ENCODE measurements at regions of chr2 and their contacts with region 1.

Region 1: GRCh38 chr2:118865106-118865505 is 17.7 kb upstream of the EN1 start:
- DNase-seq: peak; percentile 49
- H3K4me3 ChIP-seq: no peak overlapping the region
- H3K27ac ChIP-seq: no peak overlapping the region
- H3K4me1 ChIP-seq: no peaks in the 10 kb centered on the region
- H3K27me3 ChIP-seq: peaks cover 12% of the 10 kb centered on the region
- CTCF ChIP-seq: peak; percentile 66

Region 2: DNA sequence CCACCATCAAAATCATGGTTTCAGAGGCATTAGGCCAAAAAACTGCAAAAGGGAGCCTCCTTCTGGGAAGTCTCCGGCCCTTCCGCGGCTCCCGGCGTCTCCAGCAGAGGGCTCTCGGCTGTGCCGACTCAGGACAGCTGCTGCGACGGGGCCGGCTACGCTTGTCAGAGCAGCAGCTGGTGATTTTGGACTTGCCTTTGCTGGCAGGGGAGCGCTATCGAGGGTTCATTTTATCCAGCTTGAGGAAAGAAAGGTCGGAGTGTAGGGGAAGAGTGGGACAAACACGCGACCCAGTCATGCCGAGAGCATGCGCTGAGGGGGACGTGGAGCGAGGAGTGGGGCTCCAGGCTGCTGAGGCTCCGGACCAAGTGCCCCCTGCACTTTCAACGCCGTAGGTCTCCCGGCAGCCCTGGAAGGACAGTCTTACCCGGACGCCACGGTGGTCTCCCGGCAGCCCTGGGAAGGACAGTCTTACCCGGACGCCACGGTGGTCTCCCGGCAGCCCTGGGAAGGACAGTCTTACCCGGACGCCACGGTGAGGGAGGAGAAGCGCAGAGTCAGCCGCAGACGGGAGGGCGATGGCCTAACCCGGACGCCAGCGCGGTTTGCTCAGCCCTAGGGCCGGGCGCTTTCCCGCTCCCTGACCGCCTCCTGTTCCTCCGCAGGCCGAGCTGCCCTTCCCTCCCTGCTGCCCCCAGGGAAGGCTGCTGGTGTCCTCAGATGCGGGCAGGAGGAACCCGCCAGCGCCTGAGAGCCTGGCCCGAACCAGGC is 1028.9 kb before region 1 on chr2:
- CTCF ChIA-PET with region 1: no interaction called
- POLR2A ChIA-PET with region 1: no interaction called
- intact Hi-C with region 1: loop called (anchors 5 kb)
- DNase-seq: peak; percentile 86
- H3K4me3 ChIP-seq: peak overlapping the region; percentile 20
- H3K27ac ChIP-seq: no peak overlapping the region
- H3K4me1 ChIP-seq: no peaks in the 10 kb centered on the region
- H3K27me3 ChIP-seq: no peaks in the 10 kb centered on the region
- CTCF ChIP-seq: peak; percentile 90

Region 3: GRCh38 chr2:118032169-118033013 is 832.7 kb before region 1 on chr2:
- CTCF ChIA-PET with region 1: no interaction called
- POLR2A ChIA-PET with region 1: no interaction called
- intact Hi-C with region 1: loop called (anchors 5 kb)
- DNase-seq: peak; percentile 51
- H3K4me3 ChIP-seq: no peak overlapping the region
- H3K27ac ChIP-seq: no peak overlapping the region
- H3K4me1 ChIP-seq: no peaks in the 10 kb centered on the region
- H3K27me3 ChIP-seq: no peaks in the 10 kb centered on the region
- CTCF ChIP-seq: peak; percentile 85

Region 4: DNA sequence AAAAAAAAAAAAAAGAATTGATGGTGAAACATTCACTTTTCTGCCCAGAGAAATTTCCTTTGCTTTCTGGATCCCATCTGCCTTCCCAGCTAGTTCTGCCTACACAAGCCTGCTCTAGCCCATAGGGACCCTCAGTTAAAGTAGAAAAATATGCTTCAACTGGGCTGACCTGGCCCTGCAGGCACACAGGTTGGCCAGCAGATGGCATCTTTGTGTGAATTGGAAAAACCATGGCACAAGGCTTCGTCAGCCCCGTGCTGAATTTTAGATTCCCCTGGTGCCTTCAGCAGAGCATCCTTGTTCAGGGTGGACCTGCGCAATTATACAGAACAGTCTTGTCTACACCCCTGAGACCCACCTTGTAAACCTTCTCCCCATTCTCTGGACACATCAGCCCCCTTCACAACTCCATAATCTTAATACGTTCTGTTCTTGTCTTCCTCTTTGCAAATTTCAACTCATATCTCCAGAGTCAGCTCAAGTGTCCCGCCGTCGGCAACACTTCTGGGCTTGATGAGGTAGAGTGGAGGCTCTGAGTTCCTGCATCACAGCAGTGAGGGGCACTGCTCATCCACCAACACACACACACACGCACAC is 662.3 kb before region 1 on chr2:
- CTCF ChIA-PET with region 1: no interaction called
- POLR2A ChIA-PET with region 1: no interaction called
- intact Hi-C with region 1: loop called (anchors 5 kb)
- DNase-seq: peak; percentile 72
- H3K4me3 ChIP-seq: no peak overlapping the region
- H3K27ac ChIP-seq: no peak overlapping the region
- H3K4me1 ChIP-seq: no peaks in the 10 kb centered on the region
- H3K27me3 ChIP-seq: no peaks in the 10 kb centered on the region
- CTCF ChIP-seq: peak; percentile 89